Activated B cell treated with CpG ODN at 0.5 μM for 24 hours (primary cell): ENCODE measurements at regions of chr3 and their contacts with region 1.

Region 1: DNA sequence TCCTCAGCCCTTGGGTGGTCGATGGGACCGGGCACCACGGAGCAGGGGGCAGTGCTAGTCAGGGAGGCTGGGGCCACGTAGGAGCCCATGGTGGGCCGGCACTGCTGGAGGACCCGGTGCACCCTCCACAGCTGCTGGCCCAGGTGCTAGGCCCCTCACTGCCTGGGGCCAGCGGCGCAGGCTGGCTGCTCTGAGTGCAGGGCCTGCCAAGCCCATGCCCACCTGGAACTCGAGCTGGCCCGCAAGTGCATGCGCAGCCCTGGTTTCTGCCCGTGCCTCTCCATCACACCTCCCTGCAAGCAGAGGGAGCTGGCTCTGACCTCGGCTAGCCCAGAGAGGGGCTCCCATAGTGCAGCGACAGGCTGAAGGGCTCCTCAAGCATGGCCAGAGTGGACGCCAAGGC is 42.1 kb downstream of the KLHDC8B start:
- DNase-seq: no peak
- ATAC-seq: no peak
- H3K4me3 Mint-ChIP-seq: no peak overlapping the region
- H3K27ac Mint-ChIP-seq: no peak overlapping the region
- H3K4me1 Mint-ChIP-seq: no peaks in the 10 kb centered on the region
- H3K27me3 Mint-ChIP-seq: peaks cover 7% of the 10 kb centered on the region
- CTCF ChIP-seq: no peak

Region 2: DNA sequence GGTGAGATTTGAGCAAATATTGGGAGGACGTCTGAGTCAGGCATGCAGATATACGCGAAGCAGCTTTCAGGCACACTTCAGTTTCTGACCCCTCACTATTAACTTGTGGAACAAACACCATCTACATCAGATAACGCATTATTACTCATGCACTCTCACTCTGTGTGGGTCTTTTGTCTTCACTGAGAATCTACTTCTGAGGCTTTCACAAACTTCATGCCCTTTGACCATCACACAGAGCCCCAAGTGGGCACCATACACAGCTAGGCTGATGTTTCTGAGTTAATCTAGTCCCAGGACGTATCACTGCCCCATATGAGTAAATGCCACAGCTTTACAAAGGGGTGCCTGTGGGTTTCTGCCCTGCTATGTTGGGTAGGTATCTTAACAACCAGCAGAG is 456.9 kb before region 1 on chr3:
- CTCF ChIA-PET with region 1: no interaction called
- POLR2A ChIA-PET with region 1: interaction called, 18 read pairs
- intact Hi-C with region 1: no loop called
- DNase-seq: no peak
- ATAC-seq: no peak
- H3K4me3 Mint-ChIP-seq: no peak overlapping the region
- H3K27ac Mint-ChIP-seq: no peak overlapping the region
- H3K4me1 Mint-ChIP-seq: no peaks in the 10 kb centered on the region
- H3K27me3 Mint-ChIP-seq: no peaks in the 10 kb centered on the region
- CTCF ChIP-seq: no peak